ENCODE measurements at regions of chr5 and their contacts with region 1.

Region 1: GRCh38 chr5:96807075-96807654 is 580 bp downstream of the ERAP1 start:
- DNase-seq: no peak
- H3K4me3 ChIP-seq: peak overlapping the region; percentile 79
- H3K27ac ChIP-seq: peak overlapping the region; percentile 95
- H3K27me3 ChIP-seq: no peaks in the 10 kb centered on the region
- CTCF ChIP-seq: no peak

Region 2: GRCh38 chr5:96279801-96280542 is 527.2 kb before region 1 on chr5:
- CTCF ChIA-PET with region 1: no interaction called
- POLR2A ChIA-PET with region 1: no interaction called
- DNase-seq: no peak
- H3K4me3 ChIP-seq: no peak overlapping the region
- H3K27ac ChIP-seq: no peak overlapping the region
- H3K27me3 ChIP-seq: no peaks in the 10 kb centered on the region
- CTCF ChIP-seq: no peak

Region 3: DNA sequence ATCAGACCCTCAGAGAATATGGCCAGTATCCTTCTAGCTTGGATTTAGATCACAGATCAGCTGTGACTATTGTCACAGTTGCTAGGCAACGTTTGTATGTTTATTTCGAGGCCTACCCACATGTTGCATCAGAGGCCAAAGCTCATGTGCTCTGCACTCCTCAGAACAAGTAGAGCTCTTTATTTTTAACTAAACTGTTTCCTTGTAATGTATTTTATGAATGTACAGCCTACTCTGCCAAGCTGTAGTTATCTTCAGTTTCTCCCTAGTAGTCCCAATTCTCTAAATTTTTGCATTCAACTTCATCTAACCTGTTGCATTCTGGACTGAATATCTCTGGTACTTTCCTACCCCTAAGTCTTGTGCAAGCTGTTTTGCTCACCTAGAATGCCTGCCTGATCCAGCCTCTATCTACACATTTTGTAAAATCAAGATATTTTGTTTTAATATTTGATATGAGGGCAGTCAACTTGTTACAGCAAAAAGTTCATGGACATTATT is 92.2 kb before region 1 on chr5:
- CTCF ChIA-PET with region 1: no interaction called
- POLR2A ChIA-PET with region 1: interaction called, 11 read pairs
- DNase-seq: peak; percentile 57
- H3K4me3 ChIP-seq: no peak overlapping the region
- H3K27ac ChIP-seq: peak overlapping the region; percentile 3
- H3K27me3 ChIP-seq: no peaks in the 10 kb centered on the region
- CTCF ChIP-seq: no peak

Region 4: GRCh38 chr5:96823900-96824351 is 16.8 kb after region 1 on chr5:
- CTCF ChIA-PET with region 1: interaction called, 3 read pairs
- POLR2A ChIA-PET with region 1: interaction called, 22 read pairs
- DNase-seq: no peak
- H3K4me3 ChIP-seq: no peak overlapping the region
- H3K27ac ChIP-seq: no peak overlapping the region
- H3K27me3 ChIP-seq: no peaks in the 10 kb centered on the region
- CTCF ChIP-seq: no peak

Region 5: GRCh38 chr5:96876292-96876850 is 69.2 kb after region 1 on chr5 and contains the start of gene ERAP2:
- CTCF ChIA-PET with region 1: interaction called, 3 read pairs
- POLR2A ChIA-PET with region 1: interaction called, 13 read pairs
- DNase-seq: no peak
- H3K4me3 ChIP-seq: peak within 1 kb of the TSS; percentile 58
- H3K27ac ChIP-seq: no peak within 1 kb of the TSS
- H3K27me3 ChIP-seq: no peaks in the 10 kb centered on the region
- CTCF ChIP-seq: no peak
- polyA plus RNA-seq, gene ERAP2: 2.5 and 2.7 TPM in 2 replicates

Region 6: GRCh38 chr5:97183100-97183929 is 376.1 kb after region 1 on chr5 and contains the start of gene RIOK2:
- CTCF ChIA-PET with region 1: no interaction called
- POLR2A ChIA-PET with region 1: interaction called, 12 read pairs
- DNase-seq: peak; percentile 80
- H3K4me3 ChIP-seq: peak within 1 kb of the TSS; percentile 97
- H3K27ac ChIP-seq: peak within 1 kb of the TSS; percentile 93
- H3K27me3 ChIP-seq: no peaks in the 10 kb centered on the region
- CTCF ChIP-seq: no peak
- polyA plus RNA-seq, gene RIOK2: 24.2 and 35.7 TPM in 2 replicates

Region 7: GRCh38 chr5:97400537-97400936 is 593.4 kb after region 1 on chr5:
- CTCF ChIA-PET with region 1: no interaction called
- POLR2A ChIA-PET with region 1: no interaction called
- DNase-seq: no peak
- H3K4me3 ChIP-seq: no peak overlapping the region
- H3K27ac ChIP-seq: no peak overlapping the region
- H3K27me3 ChIP-seq: no peaks in the 10 kb centered on the region
- CTCF ChIP-seq: no peak